Heart left ventricle (tissue), 16 donors: ENCODE measurements at regions of chr1 and their contacts with region 1.

Region 1: DNA sequence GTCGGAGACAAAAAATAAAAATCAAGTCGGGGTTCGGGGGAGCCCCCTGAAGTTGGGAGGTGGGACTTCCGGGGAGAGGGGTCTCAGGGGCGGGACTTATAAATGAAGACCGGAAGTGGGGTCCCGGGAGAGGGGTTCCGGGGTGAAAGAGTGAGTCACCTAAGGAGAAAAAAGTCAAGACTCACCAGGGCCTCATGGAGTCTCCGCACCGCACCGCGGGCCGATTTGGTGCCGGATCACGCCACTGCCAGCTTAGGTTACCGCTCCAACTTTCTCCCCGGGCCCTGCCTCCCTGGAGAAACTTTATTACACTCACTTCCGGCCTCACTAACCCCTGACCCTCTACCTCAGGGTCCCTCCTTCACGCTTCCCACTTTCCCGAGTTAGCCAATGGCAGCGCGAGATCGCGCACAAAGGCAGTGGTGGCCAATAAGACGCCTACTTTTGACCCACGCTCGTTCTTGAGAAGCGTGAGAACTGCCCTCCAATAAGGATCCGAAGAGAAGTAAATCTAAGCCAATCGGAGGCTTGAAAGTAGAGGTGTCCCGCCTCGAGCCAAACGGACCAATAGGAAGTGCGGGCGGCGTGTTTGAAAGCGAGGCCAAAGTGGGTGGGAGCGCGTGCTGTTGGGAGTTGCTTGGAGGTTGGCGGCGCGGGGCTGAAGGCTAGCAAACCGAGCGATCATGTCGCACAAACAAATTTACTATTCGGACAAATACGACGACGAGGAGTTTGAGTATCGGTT is at the start of gene CKS1B:
- DNase-seq: peak; percentile 95 to 99 (median 98)
- ATAC-seq: peak; percentile 86 to 93 (median 88)
- H3K4me3 ChIP-seq: peak within 1 kb of the TSS; percentile 51 to 84 (median 74)
- H3K27ac ChIP-seq: peak within 1 kb of the TSS; percentile 92 to 99 (median 99)
- H3K4me1 ChIP-seq: peaks cover 22 to 61% (median 50%) of the 10 kb centered on the region in 12 donors
- H3K27me3 ChIP-seq: no peaks in the 10 kb centered on the region
- CTCF ChIP-seq: no peak
- POLR2A ChIP-seq: peak in 1 of 2 donors; percentile 51
- total RNA-seq, gene CKS1B: 11.0 to 30.0 (median 16.7) TPM

Region 2: GRCh38 chr1:154730259-154730658 is 244.0 kb before region 1 on chr1:
- intact Hi-C with region 1: no loop called
- DNase-seq: peak in 1 of 5 donors; percentile 62
- ATAC-seq: peak; percentile 37 to 91 (median 56)
- H3K4me3 ChIP-seq: peak overlapping the region in 1 of 12 donors; percentile 2
- H3K27ac ChIP-seq: peak overlapping the region; percentile 10 to 90 (median 74)
- H3K4me1 ChIP-seq: peaks cover 0 to 58% (median 37%) of the 10 kb centered on the region in 12 donors
- H3K27me3 ChIP-seq: no peaks in the 10 kb centered on the region
- CTCF ChIP-seq: no peak
- POLR2A ChIP-seq: no peak

Region 3: DNA sequence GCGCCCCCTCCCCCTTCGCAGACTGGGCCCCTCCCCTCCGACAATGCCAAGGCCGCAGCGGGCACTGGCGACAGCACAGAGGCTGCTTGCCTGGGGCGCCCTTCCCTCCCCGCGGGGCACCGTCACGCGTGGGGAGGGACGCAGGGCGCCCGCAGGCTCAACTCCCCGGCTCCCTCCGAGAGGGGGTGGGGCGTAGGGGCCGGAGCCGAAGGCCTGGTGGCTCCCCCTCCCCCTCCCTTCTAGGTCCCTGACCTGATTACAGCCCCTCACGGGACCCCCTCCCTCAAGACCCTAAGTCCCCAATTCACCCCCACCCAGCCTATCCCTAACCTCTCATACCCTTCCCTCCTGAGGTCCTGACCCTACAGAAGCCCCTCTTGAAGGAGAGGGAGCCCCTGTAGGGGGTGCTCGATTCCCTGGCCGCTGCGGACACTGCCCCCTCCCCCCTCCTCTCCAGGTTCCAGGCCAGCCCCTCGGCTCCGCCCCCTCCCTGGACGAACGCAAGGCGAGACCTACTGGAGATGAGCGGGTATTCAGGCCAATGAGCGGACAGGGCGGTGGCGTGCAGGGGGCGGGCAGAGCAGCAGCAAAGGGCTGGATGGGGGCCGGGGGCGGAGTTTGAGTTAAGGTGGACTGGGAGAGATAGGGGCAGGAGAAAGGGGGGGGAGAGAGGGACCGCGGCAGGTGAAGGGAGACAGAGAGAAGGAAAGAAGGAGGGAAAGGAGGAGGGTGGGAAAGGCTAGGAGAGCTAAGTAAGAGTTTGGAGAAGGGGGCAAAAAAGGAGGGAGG is 27.6 kb after region 1 on chr1:
- intact Hi-C with region 1: loop called in 4 of 10 experiments (anchors 1 to 2 kb)
- DNase-seq: peak; percentile 100
- ATAC-seq: peak; percentile 84 to 90 (median 89)
- H3K4me3 ChIP-seq: peak overlapping the region; percentile 70 to 96 (median 84)
- H3K27ac ChIP-seq: peak overlapping the region; percentile 77 to 98 (median 95)
- H3K4me1 ChIP-seq: peaks cover 5 to 64% (median 43%) of the 10 kb centered on the region in 12 donors
- H3K27me3 ChIP-seq: no peaks in the 10 kb centered on the region
- CTCF ChIP-seq: peak in 10 of 12 donors; percentile 12 to 63 (median 45)
- POLR2A ChIP-seq: peak in 1 of 2 donors; percentile 70

Region 4: DNA sequence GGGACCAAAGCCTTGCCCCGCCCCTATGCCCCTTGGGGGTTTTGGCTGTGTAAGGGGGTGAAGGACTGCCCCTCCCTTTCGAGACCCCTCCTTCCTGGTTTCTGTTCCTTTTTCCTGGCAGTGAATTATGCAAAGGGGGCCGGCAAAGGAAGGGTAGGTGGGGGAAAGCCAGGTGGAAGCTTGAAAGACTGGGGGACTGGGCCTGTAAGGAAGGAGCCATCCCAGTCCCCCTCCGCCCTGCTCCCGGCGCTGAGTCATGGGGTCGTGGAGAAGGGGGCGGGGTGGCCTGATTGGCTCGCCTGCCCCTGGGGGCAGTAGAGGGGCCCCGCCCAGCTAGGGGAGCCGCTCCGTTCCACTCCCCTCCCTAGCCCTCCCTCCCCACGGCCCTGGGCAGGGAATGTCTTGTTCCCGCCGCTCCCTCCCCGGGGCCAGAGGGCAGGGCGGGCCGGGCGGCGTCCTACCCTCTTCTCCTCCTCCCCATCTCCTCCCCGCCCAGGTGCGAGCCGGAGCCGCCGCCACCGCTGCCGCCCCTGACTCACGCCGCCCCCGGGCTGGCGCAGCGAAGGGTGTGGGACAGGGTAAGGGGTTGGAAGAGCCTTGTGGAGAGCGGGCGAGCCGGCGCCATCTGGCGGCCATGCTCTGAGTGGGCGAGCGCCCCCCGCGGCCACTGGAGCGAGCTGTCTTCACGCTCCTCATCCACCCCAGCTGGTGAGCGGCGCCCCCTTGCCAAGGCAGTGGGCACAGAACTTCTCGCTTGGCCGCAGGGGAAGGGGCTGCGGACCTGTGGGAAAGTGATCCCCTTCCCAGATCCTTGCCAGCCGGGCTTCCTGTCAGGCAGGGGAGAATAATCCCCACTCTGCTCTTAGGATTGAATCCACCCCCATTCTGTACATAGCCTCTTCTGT is 43.1 kb after region 1 on chr1:
- intact Hi-C with region 1: loop called in 4 of 10 experiments (anchors 5 kb)
- DNase-seq: peak; percentile 86 to 94 (median 91)
- ATAC-seq: peak; percentile 85 to 94 (median 90)
- H3K4me3 ChIP-seq: peak overlapping the region; percentile 1 to 69 (median 56)
- H3K27ac ChIP-seq: peak overlapping the region; percentile 63 to 91 (median 84)
- H3K4me1 ChIP-seq: peaks cover 5 to 44% (median 24%) of the 10 kb centered on the region in 12 donors
- H3K27me3 ChIP-seq: no peaks in the 10 kb centered on the region
- CTCF ChIP-seq: peak; percentile 97 to 100 (median 98)
- POLR2A ChIP-seq: peak in 1 of 2 donors; percentile 52

Region 5: GRCh38 chr1:155057788-155058211 is 83.6 kb after region 1 on chr1:
- intact Hi-C with region 1: loop called in 3 of 10 experiments (anchors 5 kb)
- DNase-seq: no peak
- ATAC-seq: no peak
- H3K4me3 ChIP-seq: no peak overlapping the region
- H3K27ac ChIP-seq: no peak overlapping the region
- H3K4me1 ChIP-seq: peaks cover 0 to 43% (median 27%) of the 10 kb centered on the region in 12 donors
- H3K27me3 ChIP-seq: no peaks in the 10 kb centered on the region
- CTCF ChIP-seq: no peak
- POLR2A ChIP-seq: no peak